Heart right ventricle (tissue), 16 donors: ENCODE measurements at regions of chr4 and their contacts with region 1.

Region 1: DNA sequence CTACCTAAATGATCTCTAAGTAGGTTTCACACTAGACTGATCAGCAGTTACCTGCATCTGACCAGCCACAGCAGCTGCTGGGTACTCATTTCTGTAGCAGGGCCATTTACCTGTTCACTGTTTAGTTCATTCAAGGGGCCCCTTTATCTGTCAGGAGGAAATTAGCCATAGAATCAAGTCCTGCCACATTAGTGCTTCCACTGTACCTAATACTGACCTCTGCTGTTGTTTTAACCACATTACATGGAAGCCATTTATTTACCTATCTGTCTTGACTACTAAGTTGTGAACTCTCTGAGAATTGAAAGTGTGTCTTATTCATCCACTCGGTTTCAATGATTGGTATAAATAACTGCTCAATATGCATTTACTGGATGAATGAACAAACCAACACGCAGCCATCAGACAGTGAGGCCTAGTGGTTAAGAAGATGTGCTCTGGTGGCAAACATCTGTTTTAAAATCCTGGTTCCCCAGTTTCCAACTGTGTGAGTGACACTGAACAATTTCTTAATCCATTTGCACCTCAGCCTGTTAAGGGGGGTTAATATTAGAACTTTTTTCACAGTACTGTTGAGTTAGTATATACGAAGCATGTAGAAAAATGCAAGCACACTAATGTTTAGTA is 30.0 kb upstream of the ANXA5 start:
- DNase-seq: no peak
- ATAC-seq: peak in 7 of 8 donors; percentile 44 to 81 (median 71)
- H3K4me3 ChIP-seq: no peak overlapping the region
- H3K27ac ChIP-seq: no peak overlapping the region
- H3K4me1 ChIP-seq: peaks cover 0 to 3% (median 0%) of the 10 kb centered on the region in 9 donors
- H3K27me3 ChIP-seq: no peaks in the 10 kb centered on the region
- CTCF ChIP-seq: peak; percentile 42 to 81 (median 73)

Region 2: GRCh38 chr4:121370729-121371325 is 355.9 kb before region 1 on chr4:
- intact Hi-C with region 1: loop called in 5 of 10 experiments (anchors 5 to 10 kb)
- DNase-seq: peak in 1 of 2 donors; percentile 55
- ATAC-seq: peak in 4 of 8 donors; percentile 45 to 72 (median 58)
- H3K4me3 ChIP-seq: no peak overlapping the region
- H3K27ac ChIP-seq: no peak overlapping the region
- H3K4me1 ChIP-seq: peaks cover 0 to 11% (median 0%) of the 10 kb centered on the region in 9 donors
- H3K27me3 ChIP-seq: no peaks in the 10 kb centered on the region
- CTCF ChIP-seq: peak; percentile 39 to 81 (median 74)

Region 3: GRCh38 chr4:121472937-121473721 is 253.6 kb before region 1 on chr4:
- intact Hi-C with region 1: loop called in 4 of 10 experiments (anchors 5 to 10 kb)
- DNase-seq: no peak
- ATAC-seq: no peak
- H3K4me3 ChIP-seq: no peak overlapping the region
- H3K27ac ChIP-seq: no peak overlapping the region
- H3K4me1 ChIP-seq: no peaks in the 10 kb centered on the region
- H3K27me3 ChIP-seq: no peaks in the 10 kb centered on the region
- CTCF ChIP-seq: no peak

Region 4: GRCh38 chr4:121484633-121485032 is 242.1 kb before region 1 on chr4:
- intact Hi-C with region 1: loop called in 1 of 10 experiments (anchors 10 kb)
- DNase-seq: no peak
- ATAC-seq: peak in 7 of 8 donors; percentile 53 to 87 (median 73)
- H3K4me3 ChIP-seq: no peak overlapping the region
- H3K27ac ChIP-seq: no peak overlapping the region
- H3K4me1 ChIP-seq: no peaks in the 10 kb centered on the region
- H3K27me3 ChIP-seq: no peaks in the 10 kb centered on the region
- CTCF ChIP-seq: peak; percentile 35 to 76 (median 63)

Region 5: GRCh38 chr4:121686255-121686654 is 40.5 kb before region 1 on chr4:
- intact Hi-C with region 1: loop called in 2 of 10 experiments (anchors 5 kb)
- DNase-seq: no peak
- ATAC-seq: no peak
- H3K4me3 ChIP-seq: no peak overlapping the region
- H3K27ac ChIP-seq: no peak overlapping the region
- H3K4me1 ChIP-seq: peaks cover under 1 to 51% (median 36%) of the 10 kb centered on the region in 9 donors
- H3K27me3 ChIP-seq: no peaks in the 10 kb centered on the region
- CTCF ChIP-seq: no peak

Region 6: GRCh38 chr4:121696581-121697461 is 29.9 kb before region 1 on chr4 and contains the start of gene ANXA5:
- intact Hi-C with region 1: loop called in 1 of 10 experiments (anchors 1 kb)
- DNase-seq: peak; percentile 89 to 94
- ATAC-seq: peak; percentile 94 to 99 (median 96)
- H3K4me3 ChIP-seq: peak within 1 kb of the TSS; percentile 67 to 99 (median 95)
- H3K27ac ChIP-seq: peak within 1 kb of the TSS; percentile 94 to 99 (median 98)
- H3K4me1 ChIP-seq: peaks cover 0 to 59% (median 49%) of the 10 kb centered on the region in 9 donors
- H3K27me3 ChIP-seq: no peaks in the 10 kb centered on the region
- CTCF ChIP-seq: peak in 8 of 9 donors; percentile 18 to 69 (median 42)
- total RNA-seq, gene ANXA5: 90.8 to 204 (median 115) TPM

Region 7: GRCh38 chr4:121736735-121737351 is 10.1 kb after region 1 on chr4:
- intact Hi-C with region 1: loop called in 1 of 10 experiments (anchors 1 kb)
- DNase-seq: peak in 1 of 2 donors; percentile 29
- ATAC-seq: peak in 3 of 8 donors; percentile 8 to 37 (median 34)
- H3K4me3 ChIP-seq: no peak overlapping the region
- H3K27ac ChIP-seq: no peak overlapping the region
- H3K4me1 ChIP-seq: peaks cover 0 to 27% (median 4%) of the 10 kb centered on the region in 9 donors
- H3K27me3 ChIP-seq: peaks cover 0 to 10% (median 3%) of the 10 kb centered on the region in 7 donors
- CTCF ChIP-seq: peak in 8 of 9 donors; percentile 14 to 61 (median 50)

Region 8: GRCh38 chr4:122285285-122285684 is 558.5 kb after region 1 on chr4:
- intact Hi-C with region 1: no loop called
- DNase-seq: no peak
- ATAC-seq: no peak
- H3K4me3 ChIP-seq: no peak overlapping the region
- H3K27ac ChIP-seq: no peak overlapping the region
- H3K4me1 ChIP-seq: no peaks in the 10 kb centered on the region
- H3K27me3 ChIP-seq: no peaks in the 10 kb centered on the region
- CTCF ChIP-seq: no peak